Dendritic cell treated with granulocyte-macrophage colony-stimulating factor and Interleukin-4, amounts not matched to agents 40 ng/mL and 50 ng/mL, for 4 days (primary cell): ENCODE measurements at regions of chr1 and their contacts with region 1.

Region 1: GRCh38 chr1:21176586-21177555 is at the start of gene EIF4G3:
- H3K4me3 Mint-ChIP-seq: peak within 1 kb of the TSS; percentile 96
- H3K27ac Mint-ChIP-seq: peak within 1 kb of the TSS; percentile 93
- H3K4me1 Mint-ChIP-seq: peaks cover 23% of the 10 kb centered on the region
- H3K27me3 Mint-ChIP-seq: peaks cover 4% of the 10 kb centered on the region

Region 2: DNA sequence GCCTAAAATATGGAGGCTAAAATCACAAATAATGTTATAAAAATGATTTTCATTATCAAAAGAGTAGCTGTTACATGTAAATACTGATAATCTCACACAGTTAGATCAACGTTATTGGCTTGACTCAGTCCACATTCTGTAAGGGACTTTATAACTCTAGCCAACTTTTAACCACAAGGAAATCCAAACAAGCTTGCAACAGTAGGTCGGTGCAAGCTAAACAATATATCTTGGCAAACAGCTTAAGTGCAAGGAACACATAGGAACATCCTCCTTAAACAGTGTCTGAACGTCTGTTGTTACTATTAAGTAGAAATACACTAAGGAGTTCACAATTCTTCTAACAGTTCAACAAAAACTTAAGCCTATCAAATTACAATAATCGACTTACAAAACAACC is 126.8 kb before region 1 on chr1:
- intact Hi-C with region 1: loop called (anchors 10 kb)
- H3K4me3 Mint-ChIP-seq: no peak overlapping the region
- H3K27ac Mint-ChIP-seq: no peak overlapping the region
- H3K4me1 Mint-ChIP-seq: peaks cover 10% of the 10 kb centered on the region
- H3K27me3 Mint-ChIP-seq: no peaks in the 10 kb centered on the region

Region 3: GRCh38 chr1:21082073-21082472 is 94.8 kb before region 1 on chr1:
- intact Hi-C with region 1: loop called (anchors 10 kb)
- H3K4me3 Mint-ChIP-seq: no peak overlapping the region
- H3K27ac Mint-ChIP-seq: no peak overlapping the region
- H3K4me1 Mint-ChIP-seq: peaks cover 23% of the 10 kb centered on the region
- H3K27me3 Mint-ChIP-seq: no peaks in the 10 kb centered on the region